Cardiac septum (tissue), 1 donor: ENCODE measurements at regions of chr19 and their contacts with region 1.

Region 1: GRCh38 chr19:29645911-29646310 is 19.4 kb upstream of the PLEKHF1 start:
- DNase-seq: peak; percentile 79

Region 2: DNA sequence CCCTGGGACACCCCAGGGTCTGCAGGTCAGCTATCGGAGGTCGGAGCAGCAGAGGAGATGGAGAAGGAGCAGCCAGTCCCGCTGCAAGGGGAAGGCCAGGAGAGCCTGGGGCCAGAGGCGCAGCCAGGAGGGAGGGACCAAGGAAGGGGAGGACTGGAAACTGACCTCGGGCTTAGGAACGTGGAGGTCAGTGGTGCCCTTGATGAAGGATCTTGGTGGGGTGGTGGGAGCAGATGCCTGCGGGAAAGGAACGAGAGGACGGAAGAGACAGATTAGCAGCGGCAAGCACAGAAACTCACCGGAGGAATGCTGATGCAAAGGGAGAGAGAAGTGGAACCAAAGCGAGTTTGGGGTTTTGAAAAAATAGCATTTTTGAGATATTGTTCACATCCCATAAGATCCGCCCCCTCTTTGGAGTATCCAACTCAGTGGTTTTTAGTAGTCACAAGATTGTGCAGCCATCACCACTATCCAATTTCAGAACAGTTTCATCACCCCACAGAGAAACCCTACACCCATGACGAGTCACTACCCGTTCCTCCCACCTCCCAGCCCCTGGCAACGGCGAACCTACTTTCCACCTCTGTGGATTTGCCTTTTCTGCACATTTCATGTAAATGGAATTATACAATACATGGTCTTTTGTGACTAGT is 41.5 kb after region 1 on chr19:
- intact Hi-C with region 1: loop called (anchors 5 kb)
- DNase-seq: no peak

Region 3: DNA sequence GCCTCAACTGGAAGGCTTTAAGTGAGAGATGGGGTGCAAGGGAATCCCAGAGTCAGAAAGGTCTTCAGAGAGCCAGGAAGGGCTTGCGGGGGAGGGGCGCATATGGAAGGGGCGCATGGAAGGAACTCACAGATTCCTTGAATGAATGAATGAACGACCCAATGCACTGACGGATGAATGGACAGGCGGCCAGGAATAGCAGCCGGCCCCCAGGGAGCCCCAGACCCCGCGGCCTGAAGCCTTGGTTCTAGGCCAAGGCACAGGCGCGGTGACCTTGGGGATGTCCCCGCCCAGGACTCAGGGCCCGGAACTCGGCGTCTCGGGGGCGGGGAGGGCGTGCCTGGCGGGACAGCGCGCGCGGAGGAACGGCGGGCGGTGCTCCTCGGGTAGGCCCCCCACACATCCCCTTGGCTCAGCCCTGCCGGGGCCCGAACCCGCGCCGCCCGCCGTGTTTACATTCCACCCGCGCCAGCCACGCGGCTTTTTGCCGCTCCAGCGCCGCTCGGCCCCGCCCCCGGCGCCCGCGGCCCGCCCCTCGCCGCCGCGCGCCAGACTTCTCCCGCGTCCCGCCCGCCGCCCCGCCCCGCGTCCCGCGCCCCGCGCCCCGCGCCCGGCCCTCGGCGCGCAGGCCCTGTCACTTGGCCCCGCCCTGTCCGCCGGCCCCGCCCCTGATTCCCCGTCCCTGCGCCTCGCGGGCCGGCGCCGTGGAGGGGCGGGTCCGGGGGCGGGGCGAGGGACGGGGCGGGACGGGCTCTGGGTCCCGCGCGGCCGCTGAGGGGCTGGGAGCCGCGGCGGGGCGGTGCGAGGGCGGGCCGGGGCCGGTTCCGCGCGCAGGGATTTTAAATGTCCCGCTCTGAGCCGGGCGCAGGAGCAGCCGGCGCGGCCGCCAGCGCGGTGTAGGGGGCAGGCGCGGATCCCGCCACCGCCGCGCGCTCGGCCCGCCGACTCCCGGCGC is 165.5 kb after region 1 on chr19 and contains the start of gene CCNE1:
- intact Hi-C with region 1: no loop called
- DNase-seq: peak; percentile 96
- total RNA-seq, gene CCNE1: 1.9 TPM